Calu3 (cell line): ENCODE measurements at regions of chr15 and their contacts with region 1.

Region 1: DNA sequence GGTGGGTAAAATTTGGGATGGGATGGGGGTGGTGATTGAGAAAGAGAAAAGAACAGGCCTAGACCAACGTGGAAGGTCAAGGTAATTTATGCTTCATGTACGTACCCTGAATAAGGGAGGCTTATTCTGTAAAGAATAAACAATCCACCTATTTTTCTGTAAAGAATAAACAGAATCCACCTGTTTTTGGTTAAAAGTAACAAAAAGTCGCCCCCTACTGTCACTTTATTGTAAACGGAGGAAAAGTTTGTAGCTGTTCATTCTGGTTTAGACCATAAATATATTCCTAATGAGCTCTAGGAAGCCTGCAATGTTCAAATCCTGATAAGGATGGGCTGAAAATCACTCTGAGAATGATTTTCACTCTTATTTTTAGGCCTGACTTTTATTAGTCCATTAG is 23.5 kb upstream of the SQOR start:
- DNase-seq: peak; percentile 14
- H3K4me3 Mint-ChIP-seq: no peak overlapping the region
- H3K27ac Mint-ChIP-seq: no peak overlapping the region
- H3K4me1 Mint-ChIP-seq: no peaks in the 10 kb centered on the region
- H3K27me3 Mint-ChIP-seq: no peaks in the 10 kb centered on the region
- CTCF ChIP-seq: no peak

Region 2: DNA sequence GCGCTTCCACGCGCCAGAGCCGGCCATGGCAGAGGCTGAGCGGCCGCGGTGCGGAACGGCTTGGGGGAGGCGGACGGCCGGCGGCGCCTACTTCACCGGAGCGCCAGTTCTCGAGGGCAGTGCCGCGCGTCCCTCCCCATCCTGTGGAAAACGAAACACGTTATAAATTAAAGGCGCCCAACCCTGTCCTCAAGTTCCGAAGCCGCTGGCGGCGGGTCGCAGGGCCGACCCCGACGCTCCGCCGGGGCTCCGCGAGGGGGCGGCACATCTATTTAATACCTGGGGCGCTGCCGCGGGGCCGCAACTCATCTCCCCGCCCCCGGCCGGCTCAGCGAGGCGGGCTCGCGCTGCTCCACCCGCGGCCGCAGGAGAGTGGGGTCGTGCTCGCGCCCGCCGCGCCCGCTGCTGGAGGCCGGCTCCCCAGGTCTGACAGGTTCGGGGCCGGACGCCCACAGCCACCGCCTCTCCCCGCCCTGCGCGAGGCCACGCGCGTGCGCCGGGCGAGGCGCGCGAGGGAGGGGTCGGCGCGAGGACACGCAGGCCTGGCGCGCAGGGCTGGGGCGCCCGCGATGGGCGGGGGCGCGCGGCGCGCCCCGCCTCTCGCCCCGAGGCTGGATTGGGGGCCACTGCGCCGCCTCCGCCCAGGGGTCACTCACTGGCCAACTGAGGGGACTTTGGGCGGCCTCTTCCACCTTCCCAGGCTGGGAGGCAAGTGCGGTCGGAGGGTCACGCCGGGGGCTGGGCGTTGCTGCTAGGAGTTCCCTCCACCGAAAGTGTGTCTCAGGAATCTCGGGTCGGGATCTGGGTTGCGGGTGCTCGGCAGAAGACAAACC is 88.8 kb before region 1 on chr15 and contains the start of gene SLC30A4:
- CTCF ChIA-PET with region 1: no interaction called
- intact Hi-C with region 1: loop called (anchors 2 kb)
- DNase-seq: peak; percentile 56
- H3K4me3 Mint-ChIP-seq: peak within 1 kb of the TSS; percentile 78
- H3K27ac Mint-ChIP-seq: peak within 1 kb of the TSS; percentile 45
- H3K4me1 Mint-ChIP-seq: peaks cover 23% of the 10 kb centered on the region
- H3K27me3 Mint-ChIP-seq: no peaks in the 10 kb centered on the region
- CTCF ChIP-seq: no peak
- total RNA-seq, gene SLC30A4: 2.0 and 2.3 TPM in 2 replicates

Region 3: GRCh38 chr15:45743426-45744235 is 132.3 kb after region 1 on chr15:
- CTCF ChIA-PET with region 1: no interaction called
- intact Hi-C with region 1: no loop called
- DNase-seq: no peak
- H3K4me3 Mint-ChIP-seq: no peak overlapping the region
- H3K27ac Mint-ChIP-seq: no peak overlapping the region
- H3K4me1 Mint-ChIP-seq: no peaks in the 10 kb centered on the region
- H3K27me3 Mint-ChIP-seq: peaks cover 63% of the 10 kb centered on the region
- CTCF ChIP-seq: no peak